ENCODE measurements at regions of chr16 and their contacts with region 1.

Region 1: GRCh38 chr16:3129137-3130131 is 5.4 kb upstream of the ZNF213 start:
- DNase-seq: peak; percentile 89
- ATAC-seq: peak; percentile 74
- H3K4me3 Mint-ChIP-seq: peak overlapping the region; percentile 88
- H3K27ac Mint-ChIP-seq: peak overlapping the region; percentile 88
- H3K4me1 Mint-ChIP-seq: peaks cover 58% of the 10 kb centered on the region
- H3K27me3 Mint-ChIP-seq: no peaks in the 10 kb centered on the region

Region 2: DNA sequence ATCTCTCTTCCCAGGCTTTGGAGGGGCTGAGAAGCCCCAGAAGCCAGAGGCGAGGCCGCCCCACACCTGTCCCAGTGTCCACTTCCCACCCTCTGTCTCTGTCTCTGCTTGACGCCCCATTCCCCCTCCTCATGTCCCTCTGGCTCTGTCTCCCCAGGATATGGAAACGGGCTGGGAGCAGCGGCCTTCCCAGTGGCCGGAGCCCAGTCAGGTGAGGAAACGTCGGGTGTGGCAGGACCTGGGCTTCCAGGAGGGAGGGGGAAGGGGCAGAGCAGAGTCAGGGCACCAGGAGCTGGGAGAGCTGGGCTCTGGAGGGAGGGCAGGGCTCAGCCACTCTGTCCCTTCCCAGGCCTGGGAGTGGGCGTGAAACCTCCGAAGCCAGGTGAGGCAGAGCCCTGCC is 138.5 kb before region 1 on chr16:
- CTCF ChIA-PET with region 1: no interaction called
- DNase-seq: no peak
- ATAC-seq: no peak
- H3K4me3 Mint-ChIP-seq: no peak overlapping the region
- H3K27ac Mint-ChIP-seq: no peak overlapping the region
- H3K4me1 Mint-ChIP-seq: no peaks in the 10 kb centered on the region
- H3K27me3 Mint-ChIP-seq: peaks cover 4% of the 10 kb centered on the region

Region 3: DNA sequence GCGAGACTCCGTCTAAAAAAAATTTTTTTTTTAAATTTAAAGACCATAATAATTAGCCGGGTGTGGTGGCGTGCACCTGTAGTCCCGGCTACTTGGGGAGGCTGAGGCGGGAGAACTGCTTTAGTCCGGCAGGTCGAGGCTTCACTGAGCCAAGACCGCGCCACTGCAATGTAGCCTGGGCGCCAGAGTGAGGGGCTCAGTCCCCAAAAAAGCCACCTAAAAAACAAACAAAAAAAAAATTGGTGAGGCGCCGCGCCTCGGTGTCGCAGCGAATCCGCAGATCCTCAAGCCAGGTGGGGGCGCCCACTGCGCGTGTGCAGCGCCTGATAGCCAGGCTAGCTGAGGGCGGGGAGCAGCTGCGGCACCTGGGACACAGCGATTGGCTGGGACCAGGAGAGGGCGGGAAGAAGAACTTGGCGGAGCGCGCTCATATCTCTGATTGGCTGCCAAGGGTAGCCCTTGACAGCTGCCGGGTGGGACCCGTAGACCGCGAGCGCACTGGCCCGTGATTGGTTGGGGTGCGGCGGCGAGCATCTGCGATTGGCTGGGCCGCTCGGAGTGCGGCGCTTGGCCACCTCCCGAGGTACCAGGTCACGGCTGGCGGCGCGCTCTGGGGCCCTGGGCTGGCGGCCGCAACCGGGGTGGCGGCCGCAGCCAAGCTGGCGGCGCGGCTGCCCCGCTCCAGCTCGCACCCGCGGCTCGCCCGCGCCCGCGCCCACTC is 125.7 kb before region 1 on chr16:
- CTCF ChIA-PET with region 1: interaction called, 18 read pairs
- DNase-seq: peak; percentile 99
- ATAC-seq: peak; percentile 99
- H3K4me3 Mint-ChIP-seq: peak overlapping the region; percentile 45
- H3K27ac Mint-ChIP-seq: no peak overlapping the region
- H3K4me1 Mint-ChIP-seq: peaks cover 31% of the 10 kb centered on the region
- H3K27me3 Mint-ChIP-seq: peaks cover 33% of the 10 kb centered on the region

Region 4: DNA sequence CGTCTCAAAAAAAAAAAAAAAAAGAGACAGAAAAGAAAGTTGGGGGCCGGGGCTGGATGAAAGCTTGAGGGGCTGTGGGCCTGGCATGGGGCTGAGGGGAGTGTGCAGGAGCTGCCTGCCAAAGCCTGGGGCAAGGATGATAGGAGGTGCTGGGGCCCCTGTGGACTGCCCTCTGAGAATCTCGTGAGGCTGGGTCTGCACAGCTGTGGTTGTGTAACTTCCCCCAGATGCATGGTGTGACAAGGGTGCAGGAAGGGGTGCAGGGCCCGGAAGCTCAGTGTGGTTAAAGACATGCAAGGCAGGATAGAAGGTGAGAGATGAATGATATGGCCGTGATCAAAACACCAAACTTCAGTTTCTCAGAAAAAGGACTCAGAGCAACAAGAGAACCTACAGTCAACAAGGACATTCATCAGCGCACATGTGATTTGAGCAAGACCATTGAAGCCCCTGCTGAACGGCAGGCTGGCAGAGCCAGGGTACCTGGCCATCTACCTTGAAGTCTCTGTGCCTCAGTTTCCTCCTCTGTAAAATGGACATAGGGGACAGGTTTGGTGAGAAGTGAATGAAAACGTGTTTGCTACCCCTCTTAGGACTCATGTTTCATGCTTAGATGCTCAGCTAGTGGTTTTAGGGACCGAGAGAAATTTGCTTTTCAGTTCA is 54.4 kb before region 1 on chr16:
- CTCF ChIA-PET with region 1: interaction called, 67 read pairs
- DNase-seq: peak; percentile 97
- ATAC-seq: peak; percentile 72
- H3K4me3 Mint-ChIP-seq: peak overlapping the region; percentile 79
- H3K27ac Mint-ChIP-seq: peak overlapping the region; percentile 94
- H3K4me1 Mint-ChIP-seq: peaks cover 90% of the 10 kb centered on the region
- H3K27me3 Mint-ChIP-seq: no peaks in the 10 kb centered on the region

Region 5: GRCh38 chr16:3143612-3144320 is 14.3 kb after region 1 on chr16:
- CTCF ChIA-PET with region 1: interaction called, 128 read pairs
- DNase-seq: no peak
- ATAC-seq: no peak
- H3K4me3 Mint-ChIP-seq: no peak overlapping the region
- H3K27ac Mint-ChIP-seq: no peak overlapping the region
- H3K4me1 Mint-ChIP-seq: peaks cover under 1% of the 10 kb centered on the region
- H3K27me3 Mint-ChIP-seq: no peaks in the 10 kb centered on the region

Region 6: GRCh38 chr16:3165111-3165822 is 35.8 kb after region 1 on chr16:
- CTCF ChIA-PET with region 1: interaction called, 16 read pairs
- DNase-seq: no peak
- ATAC-seq: no peak
- H3K4me3 Mint-ChIP-seq: no peak overlapping the region
- H3K27ac Mint-ChIP-seq: peak overlapping the region; percentile 49
- H3K4me1 Mint-ChIP-seq: peaks cover 28% of the 10 kb centered on the region
- H3K27me3 Mint-ChIP-seq: peaks cover 23% of the 10 kb centered on the region